H1 (cell line): ENCODE measurements at regions of chr18 and their contacts with region 1.

Region 1: DNA sequence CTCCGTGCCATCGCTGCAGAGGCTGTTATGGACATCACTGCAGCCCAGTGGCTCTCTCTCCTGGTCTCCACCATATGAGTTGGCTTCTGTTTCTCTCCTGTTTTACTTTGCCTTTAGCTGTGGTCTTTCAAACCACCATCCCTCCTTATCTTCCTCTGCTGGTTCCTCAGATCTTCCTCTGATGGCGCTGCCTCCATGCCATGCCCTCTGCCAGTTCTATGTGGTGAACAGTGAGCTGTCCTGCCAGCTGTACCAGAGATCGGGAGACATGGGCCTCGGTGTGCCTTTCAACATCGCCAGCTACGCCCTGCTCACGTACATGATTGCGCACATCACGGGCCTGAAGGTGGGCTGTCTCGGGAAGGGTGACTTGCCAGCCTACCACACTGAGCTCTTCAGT is 13.1 kb downstream of the TYMS start:
- DNase-seq: no peak
- H3K4me3 ChIP-seq: no peak overlapping the region
- H3K27ac ChIP-seq: no peak overlapping the region
- H3K4me1 ChIP-seq: no peaks in the 10 kb centered on the region
- H3K27me3 ChIP-seq: no peaks in the 10 kb centered on the region
- CTCF ChIP-seq: no peak
- EP300 ChIP-seq: no peak
- POLR2A ChIP-seq: no peak
- RAD21 ChIP-seq: no peak

Region 2: DNA sequence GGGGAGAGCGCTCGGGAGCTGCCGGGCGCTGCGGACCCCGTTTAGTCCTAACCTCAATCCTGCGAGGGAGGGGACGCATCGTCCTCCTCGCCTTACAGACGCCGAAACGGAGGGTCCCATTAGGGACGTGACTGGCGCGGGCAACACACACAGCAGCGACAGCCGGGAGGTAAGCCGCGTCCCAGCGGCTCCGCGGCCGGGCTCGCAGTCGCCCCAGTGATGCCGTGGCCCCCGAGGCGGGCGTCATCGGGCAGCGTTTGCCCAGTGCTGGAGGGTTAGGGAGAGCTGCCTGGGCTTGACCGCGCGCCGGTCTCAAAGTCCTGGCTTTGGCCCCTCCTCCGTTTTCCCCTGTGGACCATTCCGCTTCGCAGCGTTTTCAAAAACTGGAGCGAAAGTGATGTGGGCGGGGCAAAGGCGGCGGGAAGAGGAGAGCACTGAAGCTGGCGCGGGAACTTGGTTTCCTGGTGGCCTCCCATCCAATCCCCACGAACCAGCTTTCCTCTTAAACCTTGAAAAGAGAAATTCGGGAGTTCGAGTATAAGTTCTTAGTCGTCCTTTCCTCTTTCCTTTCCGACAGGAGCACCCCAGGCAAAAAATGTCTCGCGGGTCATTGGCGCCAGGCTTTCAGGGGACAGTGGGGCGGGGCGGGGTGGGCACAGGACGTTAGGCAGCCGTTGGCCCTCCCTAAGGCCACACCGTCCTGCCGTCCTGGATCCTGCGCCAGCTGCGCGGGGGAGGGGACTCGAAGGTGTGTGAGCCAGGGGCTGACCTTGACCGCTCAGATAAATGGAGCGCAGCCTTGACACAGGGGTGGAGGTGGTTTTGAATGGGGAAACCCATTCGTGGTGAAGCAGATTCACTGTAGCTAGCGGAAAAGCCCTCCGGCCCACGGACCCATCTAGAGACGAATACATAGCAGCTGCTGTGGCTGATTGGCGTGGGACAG is 12.2 kb before region 1 on chr18:
- CTCF ChIA-PET with region 1: interaction called, 4 read pairs
- POLR2A ChIA-PET with region 1: interaction called, 14 read pairs
- DNase-seq: peak; percentile 61 to 85
- H3K4me3 ChIP-seq: peak overlapping the region; percentile 78 to 96 (median 90)
- H3K27ac ChIP-seq: peak overlapping the region; percentile 84
- H3K4me1 ChIP-seq: peaks cover 0 to 10% (median 5%) of the 10 kb centered on the region in 4 experiments; a peak in 5 of 7 replicates
- H3K27me3 ChIP-seq: no peaks in the 10 kb centered on the region
- CTCF ChIP-seq: no peak
- EP300 ChIP-seq: no peak; a peak in 1 of 3 replicates
- POLR2A ChIP-seq: peak; percentile 78 to 85
- RAD21 ChIP-seq: no peak